ENCODE measurements at regions of chr3 and their contacts with region 1.

Region 1: GRCh38 chr3:129439817-129440617 is at the starts of genes IFT122 and MBD4:
- DNase-seq: peak; percentile 97

Region 2: GRCh38 chr3:128447561-128448013 is 992.4 kb before region 1 on chr3:
- CTCF ChIA-PET with region 1: no interaction called
- POLR2A ChIA-PET with region 1: no interaction called
- DNase-seq: no peak

Region 3: DNA sequence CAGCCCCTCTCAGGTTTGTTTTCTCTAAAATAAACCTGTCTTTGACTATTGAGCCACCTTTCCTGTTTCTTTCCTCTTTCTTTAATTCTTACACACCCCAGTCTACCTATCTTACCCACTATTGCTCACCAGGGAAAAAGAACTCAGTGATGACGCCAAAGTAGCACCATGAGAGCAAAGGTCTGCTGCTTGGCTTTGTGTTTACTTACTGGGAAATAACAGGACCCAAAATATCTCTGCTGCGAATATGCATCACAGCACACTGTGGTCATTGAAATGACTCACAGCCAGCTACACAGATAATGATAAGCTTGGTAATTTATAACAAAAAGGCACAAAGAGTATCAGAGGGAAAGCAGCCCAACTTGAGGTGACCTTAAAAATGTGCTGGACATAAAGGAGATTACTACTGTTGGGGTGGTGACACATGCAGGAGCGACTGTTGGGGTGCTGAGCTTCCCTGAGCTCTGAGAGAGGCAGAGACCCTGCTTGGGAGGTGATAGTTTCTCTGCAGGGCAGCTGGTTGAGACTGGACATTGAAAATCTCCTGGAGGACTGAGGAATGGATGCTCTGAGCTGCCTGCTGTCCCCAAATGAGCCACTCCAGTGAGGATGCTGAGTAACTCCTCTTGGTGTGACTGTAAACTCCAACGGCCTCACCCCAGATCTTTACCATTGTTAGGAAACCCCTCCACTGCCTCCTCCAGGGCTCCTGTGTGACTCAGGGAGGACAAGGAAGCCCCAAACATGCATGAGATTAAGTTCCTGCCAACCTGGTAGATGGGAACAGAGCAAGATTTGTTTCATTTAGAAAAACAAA is 26.1 kb before region 1 on chr3:
- CTCF ChIA-PET with region 1: no interaction called
- POLR2A ChIA-PET with region 1: interaction called, 15 read pairs
- DNase-seq: no peak

Region 4: DNA sequence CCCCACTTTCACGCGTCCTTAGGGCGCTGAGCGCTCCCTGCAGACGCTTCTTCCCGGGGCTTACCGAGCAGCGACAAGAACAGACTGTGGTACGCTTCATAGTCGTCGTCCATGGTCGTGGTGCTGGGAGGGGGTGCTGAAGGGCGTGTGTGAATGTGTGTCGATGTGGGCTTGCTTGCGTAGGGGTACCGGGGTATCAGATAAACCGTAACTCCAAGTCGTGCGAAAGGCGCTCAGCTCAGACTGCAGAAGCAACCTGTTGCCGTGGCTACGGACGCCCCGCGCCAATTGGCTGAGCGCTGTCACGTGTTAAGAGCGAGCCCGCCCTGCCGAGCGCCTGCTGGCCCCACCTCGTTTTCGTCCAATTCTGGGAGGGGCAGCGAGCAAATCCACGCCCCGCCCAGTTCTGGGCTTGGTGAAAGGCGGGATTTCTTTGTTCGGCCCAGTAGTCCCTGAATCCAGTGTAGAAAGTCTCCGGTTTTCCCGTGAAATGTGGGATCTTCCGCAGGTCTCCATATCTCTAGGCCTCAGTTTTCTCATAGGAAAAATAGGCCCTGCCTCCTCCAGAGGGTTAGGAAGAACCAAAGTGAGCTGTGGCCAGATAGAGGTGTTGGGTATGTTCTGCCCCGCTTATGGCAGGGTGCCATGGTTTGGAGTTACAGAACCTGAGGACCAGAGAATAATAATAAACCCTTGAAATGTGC is 11.5 kb before region 1 on chr3 and contains the start of gene EFCAB12:
- CTCF ChIA-PET with region 1: no interaction called
- POLR2A ChIA-PET with region 1: interaction called, 13 read pairs
- DNase-seq: peak; percentile 72

Region 5: GRCh38 chr3:129503471-129504291 is 63.7 kb after region 1 on chr3:
- CTCF ChIA-PET with region 1: no interaction called
- POLR2A ChIA-PET with region 1: no interaction called
- DNase-seq: no peak

Region 6: DNA sequence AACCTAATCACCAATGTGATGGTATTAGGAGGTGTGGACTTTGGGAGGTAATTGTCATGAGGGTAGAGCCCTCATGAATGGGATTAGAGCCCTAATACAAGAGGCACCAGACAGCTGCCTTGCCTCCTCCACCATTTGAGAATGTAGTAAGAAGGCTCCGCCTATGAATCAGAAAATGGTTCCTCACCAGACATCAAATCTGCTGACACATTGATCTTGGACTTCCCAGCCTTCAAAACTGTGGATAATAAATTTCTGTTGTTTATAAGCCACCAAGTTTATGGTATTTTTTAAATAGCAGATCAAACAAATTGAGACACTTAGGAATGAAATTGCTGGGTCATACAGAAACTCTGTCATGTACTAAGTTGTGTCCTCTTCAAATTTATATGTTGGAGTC is 848.7 kb after region 1 on chr3:
- CTCF ChIA-PET with region 1: no interaction called
- POLR2A ChIA-PET with region 1: no interaction called
- DNase-seq: no peak

Measured in HEK293T (cell line).